ENCODE measurements at regions of chr22 and their contacts with region 1.

Region 1: DNA sequence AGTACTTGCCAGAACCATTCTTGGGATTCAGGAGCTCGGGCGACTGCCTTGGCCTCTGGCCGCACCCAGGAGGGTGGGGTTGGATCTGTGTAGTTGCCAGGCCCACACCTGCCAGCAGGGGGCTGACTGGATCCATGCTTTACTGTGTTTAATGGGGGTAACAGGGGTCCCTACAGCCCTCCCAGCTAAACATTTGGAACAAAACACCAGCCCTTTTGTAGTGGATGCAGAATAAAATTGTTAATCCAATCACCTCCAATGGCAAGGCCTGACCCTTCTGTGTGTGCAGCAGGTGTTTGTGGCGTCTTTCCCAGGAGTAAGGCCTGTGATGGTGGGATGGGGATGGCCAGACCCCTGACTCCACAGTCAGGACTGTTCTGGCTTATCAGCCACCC is 22.5 kb downstream of the SUN2 start:
- DNase-seq: peak; percentile 49
- H3K4me3 Mint-ChIP-seq: no peak overlapping the region
- H3K27ac Mint-ChIP-seq: peak overlapping the region; percentile 63
- H3K4me1 Mint-ChIP-seq: peaks cover 11% of the 10 kb centered on the region
- H3K27me3 Mint-ChIP-seq: no peaks in the 10 kb centered on the region
- CTCF ChIP-seq: peak; percentile 71

Region 2: DNA sequence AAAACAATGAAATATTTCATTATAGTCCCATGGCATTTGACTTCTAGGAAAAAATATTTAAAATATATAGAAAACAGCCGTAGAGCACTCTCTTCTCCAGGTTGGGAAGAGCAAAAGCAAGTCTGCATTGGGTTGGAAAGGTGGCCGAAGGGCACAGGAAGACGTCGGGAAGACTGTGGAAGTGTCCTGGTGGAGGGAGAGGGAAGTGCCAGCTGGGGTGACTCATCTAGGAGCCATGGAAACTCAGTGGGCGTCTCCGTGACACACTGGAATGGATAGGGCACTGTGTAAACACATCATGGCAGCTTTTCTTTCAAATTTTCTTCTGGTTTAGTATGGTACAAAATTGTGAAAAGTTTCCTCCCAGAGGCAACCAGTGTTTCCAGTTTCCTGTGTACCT is 14.9 kb before region 1 on chr22:
- CTCF ChIA-PET with region 1: interaction called, 13 read pairs
- POLR2A ChIA-PET with region 1: interaction called, 6 read pairs
- intact Hi-C with region 1: no loop called
- DNase-seq: peak; percentile 91
- H3K4me3 Mint-ChIP-seq: no peak overlapping the region
- H3K27ac Mint-ChIP-seq: peak overlapping the region; percentile 60
- H3K4me1 Mint-ChIP-seq: peaks cover 16% of the 10 kb centered on the region
- H3K27me3 Mint-ChIP-seq: no peaks in the 10 kb centered on the region
- CTCF ChIP-seq: peak; percentile 66

Region 3: DNA sequence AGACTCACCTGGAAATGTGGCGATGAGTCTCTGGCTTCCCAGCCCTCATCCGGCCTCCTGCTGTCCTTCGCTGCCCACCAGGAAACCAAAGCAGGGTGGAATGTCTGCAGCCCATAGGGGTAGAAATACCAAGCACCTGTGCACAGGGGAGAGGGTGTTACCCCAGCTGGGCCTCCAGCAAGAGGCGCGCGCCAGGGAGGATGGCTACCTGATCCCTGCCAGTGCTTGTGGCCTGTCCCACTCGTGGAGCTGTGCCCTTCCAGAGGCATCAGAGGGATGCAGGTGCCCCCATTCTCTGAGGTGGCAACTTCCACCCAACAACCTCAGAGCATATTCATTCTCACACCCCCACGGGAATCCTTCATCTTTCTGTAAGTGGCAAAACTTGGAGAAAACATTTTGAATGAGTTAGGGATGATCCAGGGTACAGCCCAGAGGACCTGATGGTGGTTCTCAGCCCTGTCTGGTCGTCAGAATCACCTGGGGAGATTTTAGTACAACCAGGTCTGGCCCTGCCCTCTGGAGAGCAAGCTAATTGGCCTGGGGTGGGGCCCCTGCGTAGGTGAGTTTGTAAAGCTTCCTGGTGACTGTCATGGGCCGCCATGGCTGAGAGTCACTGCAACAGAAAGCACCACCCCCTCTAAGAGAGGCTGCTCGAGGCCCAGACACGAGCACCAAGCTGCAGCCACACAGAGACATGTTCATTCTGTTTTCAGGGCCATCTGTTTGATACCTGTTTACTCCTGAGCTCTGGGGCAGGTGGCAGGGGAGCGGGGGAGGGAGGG is 12.5 kb after region 1 on chr22:
- CTCF ChIA-PET with region 1: interaction called, 7 read pairs
- POLR2A ChIA-PET with region 1: interaction called, 10 read pairs
- intact Hi-C with region 1: no loop called
- DNase-seq: no peak
- H3K4me3 Mint-ChIP-seq: no peak overlapping the region
- H3K27ac Mint-ChIP-seq: no peak overlapping the region
- H3K4me1 Mint-ChIP-seq: no peaks in the 10 kb centered on the region
- H3K27me3 Mint-ChIP-seq: no peaks in the 10 kb centered on the region
- CTCF ChIP-seq: no peak

Region 4: GRCh38 chr22:38755911-38756532 is 22.7 kb after region 1 on chr22 and contains the start of gene SUN2:
- CTCF ChIA-PET with region 1: interaction called, 10 read pairs
- POLR2A ChIA-PET with region 1: interaction called, 4 read pairs
- intact Hi-C with region 1: no loop called
- DNase-seq: peak; percentile 84
- H3K4me3 Mint-ChIP-seq: peak within 1 kb of the TSS; percentile 81
- H3K27ac Mint-ChIP-seq: peak within 1 kb of the TSS; percentile 82
- H3K4me1 Mint-ChIP-seq: peaks cover 19% of the 10 kb centered on the region
- H3K27me3 Mint-ChIP-seq: no peaks in the 10 kb centered on the region
- CTCF ChIP-seq: no peak
- total RNA-seq, gene SUN2: 51.9 and 66.8 TPM in 2 replicates

Region 5: DNA sequence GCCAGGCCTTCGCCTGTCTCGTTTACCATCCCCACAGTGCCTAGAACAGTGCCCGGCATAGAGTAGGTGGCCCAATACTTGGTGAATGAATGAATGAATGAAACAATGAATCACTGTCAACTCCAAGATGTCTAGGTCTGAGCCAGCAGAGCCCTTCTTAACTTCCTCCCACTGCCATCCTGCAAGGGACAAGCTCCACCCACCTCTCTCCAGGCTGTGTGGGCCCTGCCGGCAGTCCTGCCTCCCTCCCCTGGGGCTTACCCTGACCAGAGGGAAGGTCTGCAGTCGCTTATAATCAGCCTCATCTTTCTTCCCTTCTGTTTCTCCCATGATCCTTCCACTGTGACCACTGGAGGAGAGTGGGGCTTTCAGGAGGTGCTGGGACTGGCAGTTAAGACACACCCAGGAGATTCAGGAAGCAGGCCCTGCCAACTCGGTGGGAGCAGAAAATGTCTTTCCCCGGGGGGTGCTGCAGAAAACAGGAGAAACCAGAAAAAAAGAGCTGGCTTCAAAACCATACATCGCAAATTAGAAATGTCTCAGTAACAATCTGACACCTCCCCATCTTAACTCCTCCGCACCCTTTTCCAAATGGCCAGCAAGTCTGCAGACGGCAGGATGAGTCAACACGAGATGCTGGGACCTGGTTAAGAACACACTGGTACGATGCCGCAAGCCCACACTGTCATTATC is 49.2 kb after region 1 on chr22:
- CTCF ChIA-PET with region 1: no interaction called
- POLR2A ChIA-PET with region 1: no interaction called
- intact Hi-C with region 1: no loop called
- DNase-seq: no peak
- H3K4me3 Mint-ChIP-seq: no peak overlapping the region
- H3K27ac Mint-ChIP-seq: no peak overlapping the region
- H3K4me1 Mint-ChIP-seq: no peaks in the 10 kb centered on the region
- H3K27me3 Mint-ChIP-seq: no peaks in the 10 kb centered on the region
- CTCF ChIP-seq: no peak

Region 6: DNA sequence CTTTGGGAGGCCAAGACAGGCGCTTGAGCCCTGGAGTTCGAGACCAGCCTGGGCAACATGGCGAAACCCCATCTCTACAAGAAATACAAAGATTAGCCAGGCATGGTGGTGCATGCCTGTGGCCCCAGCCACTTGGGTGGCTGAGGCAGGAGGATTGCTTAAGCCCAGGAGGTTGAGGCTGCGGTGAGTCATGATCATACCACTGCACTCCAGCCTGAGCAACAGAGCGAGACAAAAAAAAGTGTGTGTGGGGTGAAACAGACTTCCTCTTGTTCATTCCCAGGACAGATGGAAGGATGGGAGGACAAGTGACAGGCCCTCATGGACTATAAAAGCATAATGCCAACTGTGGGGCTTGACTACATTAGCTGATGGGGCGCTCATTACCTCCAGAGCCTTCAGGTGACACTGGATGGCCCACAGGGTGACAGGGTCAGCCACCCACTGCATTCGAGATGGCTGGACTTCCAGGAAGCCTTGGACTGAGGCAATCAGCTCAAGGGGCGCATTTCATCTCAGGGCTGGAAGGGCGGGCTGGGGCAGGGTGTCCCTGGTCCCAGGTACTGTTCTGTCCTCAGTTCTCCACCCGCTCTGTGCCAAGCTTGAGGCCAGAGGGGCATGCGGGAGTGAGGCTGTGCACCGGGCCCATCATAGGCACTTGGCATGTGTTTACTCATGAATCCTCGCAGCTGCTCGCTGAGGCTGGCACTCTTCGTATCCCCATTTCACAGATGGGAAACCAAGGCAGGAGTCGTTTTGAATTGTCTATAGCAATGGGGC is 98.0 kb after region 1 on chr22:
- CTCF ChIA-PET with region 1: no interaction called
- POLR2A ChIA-PET with region 1: no interaction called
- intact Hi-C with region 1: no loop called
- DNase-seq: peak; percentile 75
- H3K4me3 Mint-ChIP-seq: no peak overlapping the region
- H3K27ac Mint-ChIP-seq: no peak overlapping the region
- H3K4me1 Mint-ChIP-seq: peaks cover 4% of the 10 kb centered on the region
- H3K27me3 Mint-ChIP-seq: no peaks in the 10 kb centered on the region
- CTCF ChIP-seq: no peak